Activated T-helper 2 cell treated with anti-CD3 and anti-CD28 coated beads, Interferon-gamma antibody, Interleukin-2, Interleukin-4, amounts not matched to agents 10 μg/mL and 5 μg/mL and 100 μg/mL, durations not matched to agents 14 hours and 24 hours and 36 hours (primary cell): ENCODE measurements at regions of chr5 and their contacts with region 1.

Region 1: GRCh38 chr5:69369369-69370121 is at the starts of genes AK6, RAD17 and TAF9:
- DNase-seq: peak; percentile 90
- H3K4me3 Mint-ChIP-seq: peak within 1 kb of the TSS; percentile 96
- H3K27ac Mint-ChIP-seq: peak within 1 kb of the TSS; percentile 97
- H3K4me1 Mint-ChIP-seq: peaks cover 31% of the 10 kb centered on the region
- H3K27me3 Mint-ChIP-seq: no peaks in the 10 kb centered on the region
- total RNA-seq, gene AK6: 59.8 and 60.1 TPM in 2 replicates
- total RNA-seq, gene RAD17: 24.7 and 28.0 TPM in 2 replicates
- total RNA-seq, gene TAF9: 58.0 and 63.2 TPM in 2 replicates

Region 2: DNA sequence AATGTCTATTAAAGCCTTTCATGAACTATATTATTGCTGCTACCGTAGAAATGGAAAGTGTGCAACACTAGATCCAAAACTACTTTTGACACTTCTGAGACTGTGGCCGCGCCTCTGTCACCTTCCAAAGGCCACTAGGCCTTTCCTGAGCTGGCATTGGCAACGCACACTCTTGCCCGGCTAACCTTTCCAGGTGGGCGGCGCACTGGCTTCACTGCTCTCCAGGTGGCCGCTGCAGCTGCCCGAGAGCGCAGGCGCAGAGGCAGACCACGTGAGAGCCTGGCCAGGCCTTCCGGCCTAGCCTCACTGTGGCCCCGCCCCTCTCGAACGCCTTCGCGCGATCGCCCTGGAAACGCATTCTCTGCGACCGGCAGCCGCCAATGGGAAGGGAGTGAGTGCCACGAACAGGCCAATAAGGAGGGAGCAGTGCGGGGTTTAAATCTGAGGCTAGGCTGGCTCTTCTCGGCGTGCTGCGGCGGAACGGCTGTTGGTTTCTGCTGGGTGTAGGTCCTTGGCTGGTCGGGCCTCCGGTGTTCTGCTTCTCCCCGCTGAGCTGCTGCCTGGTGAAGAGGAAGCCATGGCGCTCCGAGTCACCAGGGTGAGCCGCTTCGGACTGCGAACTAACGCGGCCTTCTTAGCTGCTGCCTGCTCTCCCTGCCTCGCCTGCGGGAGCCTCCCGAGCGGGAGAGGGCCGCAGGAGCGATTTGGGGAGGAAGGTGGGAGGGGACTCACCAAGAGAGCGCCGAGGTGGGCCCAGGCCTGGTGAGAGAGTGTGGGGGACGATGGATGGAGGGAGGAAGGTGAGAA is 202.7 kb before region 1 on chr5 and contains the start of gene CCNB1:
- intact Hi-C with region 1: loop called (anchors 2 kb)
- DNase-seq: peak; percentile 99
- H3K4me3 Mint-ChIP-seq: peak within 1 kb of the TSS; percentile 94
- H3K27ac Mint-ChIP-seq: peak within 1 kb of the TSS; percentile 69
- H3K4me1 Mint-ChIP-seq: peaks cover 32% of the 10 kb centered on the region
- H3K27me3 Mint-ChIP-seq: no peaks in the 10 kb centered on the region
- total RNA-seq, gene CCNB1: 152 and 164 TPM in 2 replicates

Region 3: DNA sequence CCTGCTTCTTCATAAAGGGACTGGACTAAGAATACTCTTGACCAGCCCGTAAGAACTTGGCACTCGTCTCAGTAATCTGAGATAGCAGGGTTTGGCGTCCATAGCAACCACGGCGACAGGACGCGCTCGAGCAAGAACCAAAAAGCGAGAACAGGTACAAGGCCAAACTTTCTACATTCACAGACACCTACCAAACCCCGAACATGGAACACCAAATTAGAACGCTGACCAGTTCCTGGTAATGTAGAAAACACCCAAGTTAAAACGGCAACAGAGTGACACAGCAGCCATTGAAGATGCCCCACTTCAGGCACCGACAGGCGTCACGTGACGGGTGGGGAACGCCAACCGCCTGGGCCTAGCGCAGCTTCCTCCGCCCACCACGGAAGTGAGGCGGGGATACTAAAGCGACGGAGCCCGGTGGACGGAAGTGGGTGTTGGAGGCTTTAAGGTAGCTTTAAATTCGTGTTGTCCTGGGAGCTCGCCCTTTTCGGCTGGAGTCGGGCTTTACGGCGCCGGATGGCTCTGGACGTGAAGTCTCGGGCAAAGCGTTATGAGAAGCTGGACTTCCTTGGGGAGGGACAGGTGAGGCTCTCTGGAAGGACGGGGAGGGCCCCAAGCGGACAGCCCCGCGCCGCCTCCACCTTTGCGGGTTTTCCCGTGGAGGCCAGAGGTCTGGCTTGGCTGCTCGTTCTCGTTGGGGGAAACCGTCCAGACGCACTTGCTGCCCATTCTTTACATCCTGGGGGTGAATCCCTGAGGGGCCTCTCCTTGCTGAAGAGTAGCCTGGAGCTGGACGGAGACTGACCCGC is 134.9 kb before region 1 on chr5 and contains the start of gene CDK7:
- intact Hi-C with region 1: loop called (anchors 1 kb)
- DNase-seq: peak; percentile 91
- H3K4me3 Mint-ChIP-seq: peak within 1 kb of the TSS; percentile 95
- H3K27ac Mint-ChIP-seq: peak within 1 kb of the TSS; percentile 80
- H3K4me1 Mint-ChIP-seq: peaks cover 30% of the 10 kb centered on the region
- H3K27me3 Mint-ChIP-seq: no peaks in the 10 kb centered on the region
- total RNA-seq, gene CDK7: 46.0 and 49.4 TPM in 2 replicates

Region 4: GRCh38 chr5:69326363-69326762 is 43.2 kb before region 1 on chr5:
- intact Hi-C with region 1: no loop called
- DNase-seq: no peak
- H3K4me3 Mint-ChIP-seq: no peak overlapping the region
- H3K27ac Mint-ChIP-seq: no peak overlapping the region
- H3K4me1 Mint-ChIP-seq: peaks cover 3% of the 10 kb centered on the region
- H3K27me3 Mint-ChIP-seq: no peaks in the 10 kb centered on the region